Activated CD8-positive, alpha-beta T cell treated with anti-CD3 and anti-CD28 coated beads for 36 hours (primary cell): ENCODE measurements at regions of chr16 and their contacts with region 1.

Region 1: GRCh38 chr16:48164907-48165726 is 9.3 kb upstream of the ABCC12 start:
- DNase-seq: peak; percentile 73
- ATAC-seq: peak; percentile 91
- H3K4me3 Mint-ChIP-seq: no peak overlapping the region
- H3K27ac Mint-ChIP-seq: no peak overlapping the region
- H3K4me1 Mint-ChIP-seq: no peaks in the 10 kb centered on the region
- H3K27me3 Mint-ChIP-seq: peaks cover 7% of the 10 kb centered on the region
- CTCF ChIP-seq: peak; percentile 88

Region 2: DNA sequence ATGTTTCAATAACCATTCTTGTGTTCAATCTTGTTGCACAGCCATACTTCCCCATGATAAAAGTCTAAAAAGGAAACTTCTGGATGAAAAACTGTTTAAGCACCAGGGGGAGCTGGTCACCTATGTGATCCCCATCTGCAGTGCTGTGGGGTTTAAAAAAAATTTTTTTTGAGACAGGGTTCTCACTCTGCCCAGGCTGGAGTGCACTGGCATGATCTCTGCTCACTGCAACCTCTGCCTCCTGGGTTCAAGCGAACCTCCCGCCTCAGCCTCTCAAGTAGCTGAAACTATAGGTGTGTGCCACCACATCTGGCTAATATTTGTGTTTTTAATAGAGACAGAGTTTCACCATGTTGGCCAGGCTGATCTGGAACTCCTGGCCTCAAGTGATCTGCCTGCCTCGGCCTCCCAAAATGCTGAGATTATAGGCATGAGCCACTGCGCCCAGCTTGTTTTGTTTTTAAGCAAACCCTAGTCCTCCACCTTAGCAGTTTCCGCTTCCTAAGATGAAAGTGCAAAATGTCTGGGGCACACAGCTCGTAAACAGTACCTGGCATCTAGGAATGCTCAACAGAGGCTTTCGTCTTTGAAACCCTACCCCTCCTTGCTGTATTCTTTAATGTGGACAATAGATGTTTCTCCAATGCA is 1217.1 kb before region 1 on chr16:
- CTCF ChIA-PET with region 1: interaction called, 5 read pairs
- POLR2A ChIA-PET with region 1: no interaction called
- intact Hi-C with region 1: loop called (anchors 10 kb)
- DNase-seq: peak; percentile 56
- ATAC-seq: peak; percentile 70
- H3K4me3 Mint-ChIP-seq: no peak overlapping the region
- H3K27ac Mint-ChIP-seq: no peak overlapping the region
- H3K4me1 Mint-ChIP-seq: peaks cover 7% of the 10 kb centered on the region
- H3K27me3 Mint-ChIP-seq: no peaks in the 10 kb centered on the region
- CTCF ChIP-seq: peak; percentile 70

Region 3: GRCh38 chr16:48087639-48088038 is 77.5 kb before region 1 on chr16:
- CTCF ChIA-PET with region 1: no interaction called
- POLR2A ChIA-PET with region 1: no interaction called
- intact Hi-C with region 1: no loop called
- DNase-seq: no peak
- ATAC-seq: no peak
- H3K4me3 Mint-ChIP-seq: no peak overlapping the region
- H3K27ac Mint-ChIP-seq: no peak overlapping the region
- H3K4me1 Mint-ChIP-seq: no peaks in the 10 kb centered on the region
- H3K27me3 Mint-ChIP-seq: peaks cover 10% of the 10 kb centered on the region
- CTCF ChIP-seq: no peak

Region 4: DNA sequence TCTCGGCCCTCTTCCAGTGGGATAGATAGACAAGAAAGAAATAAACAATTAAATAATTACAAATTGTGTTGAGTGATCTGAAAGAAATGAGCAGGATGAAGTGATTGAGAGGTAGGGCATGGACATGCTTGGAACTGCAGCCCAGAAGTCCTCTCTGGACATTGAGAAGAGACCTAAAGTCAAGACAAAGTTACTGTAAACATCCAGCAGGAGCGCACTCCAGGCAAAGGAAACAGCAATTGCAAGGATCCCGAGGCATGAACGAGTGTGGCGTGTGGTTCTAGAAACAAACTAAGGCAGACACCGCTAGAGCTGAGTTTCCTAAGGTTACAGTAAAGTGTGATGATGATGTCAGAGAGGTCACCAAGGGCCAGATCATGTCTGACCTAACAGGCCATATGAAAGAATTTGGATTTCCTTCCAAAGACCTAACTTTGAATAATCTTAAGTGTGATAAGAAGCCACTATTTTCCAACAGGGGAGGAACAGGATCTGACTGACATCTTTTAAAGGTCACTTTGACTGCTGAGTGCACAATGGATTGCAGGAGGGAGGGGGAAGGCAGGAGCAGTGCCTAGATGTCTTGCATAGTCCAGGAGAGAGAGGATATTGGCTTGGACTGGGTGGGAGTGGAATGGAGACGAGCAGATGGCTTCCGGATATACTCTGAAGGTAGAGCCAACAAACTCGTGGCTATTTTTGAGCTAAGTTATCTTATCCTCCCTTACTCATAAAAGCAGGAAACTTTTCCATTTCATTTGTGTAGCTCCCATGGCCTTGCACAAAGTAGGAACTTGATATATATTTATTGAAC is 28.4 kb before region 1 on chr16:
- CTCF ChIA-PET with region 1: interaction called, 11 read pairs
- POLR2A ChIA-PET with region 1: no interaction called
- intact Hi-C with region 1: no loop called
- DNase-seq: no peak
- ATAC-seq: no peak
- H3K4me3 Mint-ChIP-seq: no peak overlapping the region
- H3K27ac Mint-ChIP-seq: no peak overlapping the region
- H3K4me1 Mint-ChIP-seq: no peaks in the 10 kb centered on the region
- H3K27me3 Mint-ChIP-seq: peaks cover under 1% of the 10 kb centered on the region
- CTCF ChIP-seq: no peak

Region 5: GRCh38 chr16:48176635-48177408 is 11.7 kb after region 1 on chr16:
- CTCF ChIA-PET with region 1: interaction called, 16 read pairs
- POLR2A ChIA-PET with region 1: interaction called, 5 read pairs
- intact Hi-C with region 1: no loop called
- DNase-seq: no peak
- ATAC-seq: no peak
- H3K4me3 Mint-ChIP-seq: no peak overlapping the region
- H3K27ac Mint-ChIP-seq: no peak overlapping the region
- H3K4me1 Mint-ChIP-seq: no peaks in the 10 kb centered on the region
- H3K27me3 Mint-ChIP-seq: peaks cover 4% of the 10 kb centered on the region
- CTCF ChIP-seq: no peak

Region 6: DNA sequence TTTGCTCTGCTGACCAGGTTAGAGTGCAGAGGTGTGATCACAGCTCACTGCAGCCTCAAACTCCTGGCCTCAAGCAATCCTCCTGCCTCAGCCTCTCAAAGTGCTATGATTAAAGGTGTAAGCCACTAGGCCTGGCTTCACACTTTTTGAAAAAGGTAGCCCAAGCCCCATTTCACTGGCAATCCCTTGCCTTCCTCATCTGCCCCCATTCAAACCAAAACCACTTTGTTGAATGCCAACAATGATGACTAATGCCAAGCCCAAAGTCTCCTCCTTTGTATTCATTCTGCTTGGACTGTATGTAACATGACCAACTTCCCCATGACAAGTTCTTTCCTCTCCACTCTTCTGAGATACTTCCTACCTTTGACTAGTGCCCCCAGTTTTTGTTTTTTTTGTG is 411.8 kb after region 1 on chr16:
- CTCF ChIA-PET with region 1: no interaction called
- POLR2A ChIA-PET with region 1: no interaction called
- intact Hi-C with region 1: no loop called
- DNase-seq: peak; percentile 62
- ATAC-seq: peak; percentile 94
- H3K4me3 Mint-ChIP-seq: no peak overlapping the region
- H3K27ac Mint-ChIP-seq: peak overlapping the region; percentile 65
- H3K4me1 Mint-ChIP-seq: peaks cover 60% of the 10 kb centered on the region
- H3K27me3 Mint-ChIP-seq: no peaks in the 10 kb centered on the region
- CTCF ChIP-seq: no peak